Activated CD4-positive, alpha-beta memory T cell treated with anti-CD3 and anti-CD28 coated beads for 36 hours (primary cell): ENCODE measurements at regions of chr7 and their contacts with region 1.

Region 1: DNA sequence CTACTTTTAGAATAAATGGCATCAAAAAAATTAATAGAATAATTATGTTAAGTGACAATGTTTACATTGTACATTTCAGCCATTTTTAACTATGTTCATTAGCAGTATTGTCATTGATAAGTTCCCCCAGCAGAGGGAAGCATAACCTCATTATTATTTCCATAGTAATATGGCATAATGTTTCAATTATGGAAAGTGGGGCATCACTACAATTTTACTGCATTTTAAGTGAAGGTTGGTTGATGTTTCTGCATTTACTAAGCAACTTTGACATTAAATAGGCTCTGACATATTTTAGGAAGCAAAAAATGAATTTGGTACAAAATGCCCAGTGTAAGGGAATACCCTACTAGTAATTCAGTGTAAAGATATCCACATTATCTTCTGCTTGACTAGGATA is 218.3 kb downstream of the SEMA3A start:
- DNase-seq: no peak
- H3K4me3 Mint-ChIP-seq: no peak overlapping the region
- H3K27ac Mint-ChIP-seq: no peak overlapping the region
- H3K4me1 Mint-ChIP-seq: no peaks in the 10 kb centered on the region
- H3K27me3 Mint-ChIP-seq: no peaks in the 10 kb centered on the region

Region 2: DNA sequence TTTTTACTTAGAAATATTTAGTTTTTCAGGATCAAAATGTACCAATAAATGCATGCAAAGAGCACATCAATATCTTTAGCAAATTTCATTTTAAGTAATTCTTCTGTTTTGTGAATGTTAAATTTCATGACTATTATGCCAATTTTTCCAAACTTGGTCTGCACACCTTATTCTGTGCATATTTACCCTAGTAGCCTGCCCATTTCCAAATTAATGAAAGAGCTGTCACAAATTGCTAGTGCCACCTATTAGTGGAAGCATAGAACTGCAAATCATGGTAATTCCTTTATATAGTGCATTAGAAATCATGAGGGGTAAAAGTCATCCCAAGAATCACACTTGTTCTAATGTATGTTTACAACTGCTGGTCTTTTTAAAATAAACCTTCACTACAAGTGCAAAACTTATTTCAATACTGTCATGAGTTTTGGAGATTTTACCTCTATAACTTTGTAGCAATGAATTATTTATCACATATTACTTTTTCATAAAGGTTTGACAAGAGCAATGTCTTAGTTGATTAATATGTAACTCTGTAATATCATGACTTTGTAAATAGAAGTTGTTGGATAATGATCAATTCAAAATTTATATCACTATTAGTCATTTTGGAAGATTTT is 212.6 kb after region 1 on chr7:
- CTCF ChIA-PET with region 1: no interaction called
- POLR2A ChIA-PET with region 1: no interaction called
- intact Hi-C with region 1: loop called (anchors 2 kb)
- DNase-seq: no peak
- H3K4me3 Mint-ChIP-seq: no peak overlapping the region
- H3K27ac Mint-ChIP-seq: no peak overlapping the region
- H3K4me1 Mint-ChIP-seq: peaks cover 16% of the 10 kb centered on the region
- H3K27me3 Mint-ChIP-seq: no peaks in the 10 kb centered on the region

Region 3: DNA sequence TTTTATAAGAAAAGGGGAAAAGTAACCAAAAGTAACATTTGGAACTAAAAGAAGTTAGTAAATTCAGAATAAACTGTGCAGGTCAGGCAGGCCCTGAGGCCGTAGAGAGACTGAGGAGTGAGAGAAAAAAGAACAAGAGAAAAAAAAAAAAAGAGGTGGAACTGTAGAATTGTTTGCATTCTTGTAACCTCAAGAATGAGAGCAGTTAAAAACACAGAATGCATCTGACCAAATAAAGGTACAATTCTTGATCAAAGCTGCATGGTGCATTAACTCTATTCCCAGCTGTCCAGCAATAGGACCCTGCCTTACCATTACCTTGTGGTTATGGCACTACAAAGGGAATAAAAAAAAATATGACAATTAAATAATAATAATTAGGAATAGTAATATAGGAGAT is 388.4 kb after region 1 on chr7:
- CTCF ChIA-PET with region 1: no interaction called
- POLR2A ChIA-PET with region 1: no interaction called
- intact Hi-C with region 1: no loop called
- DNase-seq: no peak
- H3K4me3 Mint-ChIP-seq: no peak overlapping the region
- H3K27ac Mint-ChIP-seq: no peak overlapping the region
- H3K4me1 Mint-ChIP-seq: no peaks in the 10 kb centered on the region
- H3K27me3 Mint-ChIP-seq: no peaks in the 10 kb centered on the region

Region 4: DNA sequence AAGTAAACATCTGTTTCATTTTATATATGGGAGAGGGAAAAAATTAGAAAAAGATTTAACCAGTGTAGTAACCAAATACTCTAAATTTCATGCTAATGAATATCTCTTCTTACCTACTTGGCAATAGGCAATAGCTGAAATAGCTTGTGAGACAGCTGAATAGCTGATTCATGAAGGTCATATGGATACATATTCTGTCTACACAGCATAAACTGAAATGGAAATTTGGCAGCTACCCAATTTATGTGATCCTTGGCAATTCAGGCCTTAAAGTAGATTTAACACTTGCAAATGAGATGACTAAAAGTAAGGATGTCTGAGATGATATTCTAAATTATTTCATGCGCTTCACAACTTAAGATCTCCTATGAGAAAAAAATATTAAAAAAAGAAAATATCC is 479.5 kb after region 1 on chr7:
- CTCF ChIA-PET with region 1: no interaction called
- POLR2A ChIA-PET with region 1: no interaction called
- intact Hi-C with region 1: loop called (anchors 5 kb)
- DNase-seq: no peak
- H3K4me3 Mint-ChIP-seq: no peak overlapping the region
- H3K27ac Mint-ChIP-seq: no peak overlapping the region
- H3K4me1 Mint-ChIP-seq: no peaks in the 10 kb centered on the region
- H3K27me3 Mint-ChIP-seq: no peaks in the 10 kb centered on the region